ENCODE measurements at regions of chr17 and their contacts with region 1.

Region 1: DNA sequence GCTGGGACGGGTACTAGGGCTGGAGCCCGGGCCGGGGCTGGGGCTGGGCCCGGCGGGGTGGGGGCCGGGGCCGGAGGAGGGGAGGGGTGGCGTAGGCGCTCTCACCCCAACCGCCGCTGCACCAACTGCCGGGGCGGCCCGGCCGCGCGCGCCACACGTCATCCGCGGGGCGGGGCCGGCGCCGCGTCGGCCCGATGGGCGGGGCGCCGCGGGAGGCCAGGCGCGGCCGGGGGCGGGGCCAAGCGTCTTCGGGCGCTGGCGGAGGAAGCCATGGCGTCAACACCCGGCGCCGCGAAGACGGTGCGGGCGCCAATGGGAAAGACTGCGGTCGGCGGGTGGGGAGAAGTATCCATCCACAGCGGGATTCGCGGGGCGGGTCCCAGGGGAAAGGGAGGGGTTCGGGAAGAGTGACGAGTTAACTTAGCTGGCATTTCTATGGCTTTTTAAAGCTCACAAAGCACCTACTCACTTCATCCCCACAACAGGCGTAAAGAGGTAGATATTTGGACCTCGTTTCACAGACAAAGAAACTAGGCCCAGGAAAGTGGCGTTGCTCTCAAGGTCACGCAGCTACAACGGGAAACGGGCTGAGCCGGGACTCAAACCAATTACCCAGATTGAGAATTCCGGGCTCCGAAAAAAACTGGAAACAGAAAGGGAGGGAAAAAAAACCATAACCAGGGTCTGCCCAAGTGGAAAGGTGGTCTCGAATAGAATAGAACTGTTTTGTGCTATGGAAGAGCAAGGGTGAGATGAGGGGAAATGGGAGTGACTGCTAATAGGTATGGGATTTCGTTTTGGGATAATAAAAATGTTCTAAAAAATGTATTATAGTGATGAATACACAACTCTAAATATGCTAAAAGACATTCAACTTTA is at the start of gene SPAG9:
- H3K4me3 ChIP-seq: peak within 1 kb of the TSS; percentile 96
- H3K27ac ChIP-seq: peak within 1 kb of the TSS; percentile 95
- H3K4me1 ChIP-seq: peaks cover 14% of the 10 kb centered on the region
- CTCF ChIP-seq: no peak

Region 2: DNA sequence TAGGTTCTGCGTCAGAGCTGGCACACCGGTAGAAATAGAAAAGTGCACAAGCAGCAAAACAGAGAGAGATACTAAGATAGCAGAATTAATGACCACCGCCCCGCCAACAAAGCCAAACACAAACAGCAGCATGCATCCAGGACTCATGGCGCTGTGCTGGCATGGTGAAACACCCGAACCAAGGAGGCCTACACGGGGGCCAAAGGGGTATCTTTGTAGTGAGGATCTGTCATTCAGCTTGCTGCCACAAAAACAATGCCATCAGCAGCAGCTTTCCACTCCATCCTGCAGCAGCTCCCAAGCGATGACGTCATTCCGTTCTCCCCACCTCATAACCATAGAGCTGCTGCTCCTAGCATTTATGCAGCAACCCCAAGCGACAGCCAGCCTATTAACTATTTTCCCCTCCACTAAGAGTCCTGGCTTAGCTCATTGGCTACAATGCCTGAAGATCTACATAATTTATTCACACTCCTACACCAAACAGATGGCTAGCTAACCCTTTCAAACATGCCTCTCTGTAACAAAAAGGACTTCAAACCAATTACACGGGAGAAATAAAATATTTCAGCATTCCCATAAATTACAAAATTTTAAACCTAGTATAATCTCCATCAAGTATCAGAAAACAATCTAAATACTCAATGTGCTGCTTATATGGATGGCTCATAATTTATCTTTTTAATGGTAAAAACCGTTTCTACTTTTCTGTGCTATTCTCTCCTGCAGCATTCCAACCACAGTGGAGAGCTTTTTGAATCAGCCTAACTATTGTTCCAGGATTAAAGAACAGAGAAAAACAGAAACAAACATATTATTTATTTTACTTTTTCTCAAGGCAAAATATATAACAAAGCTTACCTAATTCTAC is 74.2 kb before region 1 on chr17:
- CTCF ChIA-PET with region 1: no interaction called
- POLR2A ChIA-PET with region 1: interaction called, 12 read pairs
- H3K4me3 ChIP-seq: peak overlapping the region; percentile 6
- H3K27ac ChIP-seq: peak overlapping the region; percentile 52
- H3K4me1 ChIP-seq: peaks cover 15% of the 10 kb centered on the region
- CTCF ChIP-seq: no peak

Region 3: GRCh38 chr17:51087072-51087757 is 33.8 kb before region 1 on chr17:
- CTCF ChIA-PET with region 1: no interaction called
- POLR2A ChIA-PET with region 1: no interaction called
- H3K4me3 ChIP-seq: no peak overlapping the region
- H3K27ac ChIP-seq: no peak overlapping the region
- H3K4me1 ChIP-seq: peaks cover 9% of the 10 kb centered on the region
- CTCF ChIP-seq: no peak